ENCODE measurements at regions of chr7 and their contacts with region 1.

Region 1: GRCh38 chr7:95476904-95477594 is 8.7 kb upstream of the ASB4 start:
- DNase-seq: no peak
- H3K4me3 ChIP-seq: no peak overlapping the region
- CTCF ChIP-seq: peak; percentile 55

Region 2: GRCh38 chr7:94436018-94436604 is 1040.9 kb before region 1 on chr7:
- CTCF ChIA-PET with region 1: interaction called, 12 read pairs
- POLR2A ChIA-PET with region 1: no interaction called
- DNase-seq: no peak
- H3K4me3 ChIP-seq: no peak overlapping the region
- CTCF ChIP-seq: peak; percentile 69

Region 3: GRCh38 chr7:95436407-95436806 is 40.6 kb before region 1 on chr7:
- CTCF ChIA-PET with region 1: interaction called, 10 read pairs
- POLR2A ChIA-PET with region 1: no interaction called
- DNase-seq: no peak
- H3K4me3 ChIP-seq: no peak overlapping the region
- CTCF ChIP-seq: no peak

Region 4: GRCh38 chr7:95491634-95492320 is 14.7 kb after region 1 on chr7:
- CTCF ChIA-PET with region 1: interaction called, 46 read pairs
- POLR2A ChIA-PET with region 1: no interaction called
- DNase-seq: no peak
- H3K4me3 ChIP-seq: no peak overlapping the region
- CTCF ChIP-seq: no peak

Region 5: DNA sequence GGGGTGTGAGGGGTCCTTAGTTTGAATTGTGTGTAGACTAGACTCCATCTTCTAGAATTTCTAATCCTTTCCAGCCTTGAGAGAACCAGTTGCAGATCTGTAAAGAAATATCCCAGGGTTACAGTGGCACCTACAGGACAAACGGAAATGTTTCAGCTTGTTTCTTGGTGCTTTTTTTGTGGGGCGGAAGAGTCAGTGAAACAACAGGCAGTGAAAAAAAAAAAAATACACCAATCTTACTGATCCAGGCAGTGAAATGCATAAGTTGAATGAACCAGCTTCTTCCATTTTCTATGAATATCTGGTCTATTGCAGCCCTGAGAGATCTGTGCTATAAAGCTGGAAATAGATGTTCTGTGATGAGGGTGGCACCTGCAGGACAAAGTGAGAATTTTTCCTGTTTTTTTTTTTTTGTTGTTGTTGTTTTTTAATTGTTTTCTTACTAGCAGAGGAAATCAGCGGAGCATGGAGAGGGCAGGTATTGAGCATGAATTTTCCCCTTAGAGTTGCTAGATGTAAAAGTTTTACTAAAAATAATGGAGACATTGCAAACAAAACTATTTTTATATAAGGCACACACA is 213.4 kb after region 1 on chr7:
- CTCF ChIA-PET with region 1: interaction called, 10 read pairs
- POLR2A ChIA-PET with region 1: no interaction called
- DNase-seq: no peak
- H3K4me3 ChIP-seq: no peak overlapping the region
- CTCF ChIP-seq: peak; percentile 12

Measured in AG04449 (cell line).